Posterior cingulate gyrus (tissue), 11 donors: ENCODE measurements at regions of chr6 and their contacts with region 1.

Region 1: DNA sequence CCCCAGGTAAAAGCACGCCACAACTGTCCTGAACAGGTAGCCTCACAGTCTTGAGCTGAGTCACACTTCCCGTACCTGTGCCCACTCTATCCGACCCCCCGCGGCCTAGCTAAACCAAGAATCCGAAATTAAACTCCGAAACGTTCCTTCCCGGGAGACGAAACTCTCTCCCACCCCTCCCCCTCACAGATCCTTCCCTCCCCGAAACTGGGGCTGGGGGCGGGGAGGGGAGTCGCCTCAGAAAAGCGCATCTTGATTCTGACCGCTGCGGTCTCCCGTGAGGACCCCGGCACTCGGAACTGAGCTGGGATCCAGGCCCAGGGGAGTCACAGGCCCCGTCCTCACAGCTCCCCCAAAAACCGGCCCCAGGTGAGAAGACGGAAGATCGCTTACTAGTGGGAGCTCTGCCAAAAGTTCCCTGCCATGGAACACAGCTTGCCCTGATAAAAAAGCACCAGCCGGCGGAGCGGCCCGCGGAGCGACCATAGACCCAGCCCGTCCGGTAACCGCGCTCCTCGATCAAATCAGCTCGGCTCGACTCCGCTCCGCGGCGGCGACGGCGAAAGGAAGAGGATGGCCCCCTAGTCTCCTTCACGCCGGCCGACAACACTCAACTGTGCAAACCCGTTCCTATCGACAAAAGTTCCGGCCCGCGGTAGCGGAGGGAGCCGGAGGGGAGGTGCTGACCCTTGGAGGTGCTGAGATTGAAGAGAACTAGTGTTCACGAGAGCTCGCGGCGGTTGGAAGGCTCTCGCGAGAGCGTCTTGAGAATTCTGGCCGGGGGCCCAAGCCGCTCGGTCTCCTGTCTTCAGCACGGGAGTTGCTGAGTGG is at the start of gene CCNC:
- DNase-seq: peak; percentile 81 to 98 (median 88)

Region 2: GRCh38 chr6:99364026-99364425 is 204.3 kb before region 1 on chr6:
- intact Hi-C with region 1: no loop called
- DNase-seq: no peak

Region 3: DNA sequence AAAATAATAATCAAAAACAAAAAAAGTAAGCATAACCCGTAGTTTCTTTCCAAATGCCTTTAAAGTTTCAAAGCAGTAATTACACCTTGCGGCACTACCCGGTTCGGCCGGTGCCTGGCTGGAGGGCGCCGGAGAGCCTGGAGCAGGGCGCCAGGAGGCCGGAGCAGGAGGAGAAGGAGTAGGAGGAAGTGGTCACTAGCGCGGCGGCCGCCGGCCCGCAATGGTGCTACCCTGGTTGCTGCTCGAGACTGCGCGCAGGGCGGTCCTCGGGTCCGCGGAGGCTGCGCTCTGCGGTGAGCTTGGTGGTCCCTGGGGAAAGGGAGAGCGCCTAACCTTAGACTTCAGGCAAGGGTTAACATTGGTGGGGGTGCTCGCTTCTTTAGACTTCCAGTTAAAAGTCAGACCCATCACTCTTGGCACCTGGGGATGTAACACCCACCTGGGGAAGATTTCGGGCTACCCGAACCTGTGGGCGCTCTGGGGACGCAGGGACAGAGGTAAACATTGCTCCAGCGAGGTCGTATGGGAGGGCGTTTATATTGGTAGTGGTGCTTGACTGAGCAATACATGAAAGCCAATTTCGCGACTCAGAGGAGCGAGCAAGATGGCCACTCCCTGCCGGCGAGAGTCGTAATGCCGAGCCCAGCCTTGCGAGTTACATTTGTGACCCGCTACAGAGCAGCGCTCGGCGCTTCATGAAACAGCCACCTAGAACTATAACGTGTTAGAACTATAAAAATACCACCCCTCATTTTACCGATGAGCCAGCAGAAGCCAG is 47.3 kb before region 1 on chr6:
- intact Hi-C with region 1: loop called (anchors 2 kb)
- DNase-seq: peak; percentile 67 to 97 (median 82)